ENCODE measurements at regions of chr11 and their contacts with region 1.

Region 1: DNA sequence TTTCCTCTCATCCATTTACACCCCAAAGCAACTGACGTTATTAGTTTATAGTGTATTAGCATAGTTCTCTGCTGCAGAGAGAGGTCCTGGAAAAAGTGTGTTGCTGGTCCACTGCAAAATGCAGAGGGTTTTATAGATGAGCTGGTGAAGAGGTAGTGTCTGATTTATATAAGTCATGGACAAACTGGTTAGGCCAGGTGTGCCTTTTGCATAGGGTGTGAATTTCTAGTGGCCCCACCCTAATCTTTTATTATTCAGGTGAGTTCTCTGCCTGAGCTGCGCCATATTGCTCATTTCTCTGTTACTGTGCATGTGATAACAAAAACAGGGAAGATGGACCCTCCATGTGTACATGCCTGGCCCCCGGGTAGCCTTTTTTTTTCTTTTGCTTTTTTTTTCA is 43.1 kb upstream of the TRIM77 start:
- DNase-seq: no peak

Region 2: DNA sequence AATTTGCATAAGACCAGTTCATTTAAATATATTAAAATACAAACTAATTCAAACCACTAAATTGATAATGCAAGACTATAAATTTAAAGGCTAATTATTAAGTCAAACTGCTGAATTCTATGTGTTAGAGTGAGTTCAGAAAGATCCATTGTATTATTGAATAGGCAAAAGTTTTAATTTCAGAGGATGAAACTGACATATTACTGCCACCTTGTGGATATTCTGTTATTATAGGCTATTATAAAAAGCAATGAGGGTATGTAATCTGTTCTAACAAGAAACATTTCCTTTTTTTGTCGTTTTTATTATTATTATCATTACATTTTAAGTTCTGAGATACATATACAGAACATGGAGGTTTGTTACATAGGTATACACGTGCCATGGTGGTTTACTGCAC is 446.5 kb after region 1 on chr11:
- intact Hi-C with region 1: loop called (anchors 10 kb)
- DNase-seq: no peak